BJ (cell line): ENCODE measurements at regions of chr9 and their contacts with region 1.

Region 1: GRCh38 chr9:87107072-87107471 is 159.8 kb upstream of the GAS1 start:
- DNase-seq: no peak
- H3K4me3 ChIP-seq: no peak overlapping the region
- H3K27me3 ChIP-seq: no peaks in the 10 kb centered on the region
- CTCF ChIP-seq: peak; percentile 17; the same call in 1 of the 2 replicates

Region 2: DNA sequence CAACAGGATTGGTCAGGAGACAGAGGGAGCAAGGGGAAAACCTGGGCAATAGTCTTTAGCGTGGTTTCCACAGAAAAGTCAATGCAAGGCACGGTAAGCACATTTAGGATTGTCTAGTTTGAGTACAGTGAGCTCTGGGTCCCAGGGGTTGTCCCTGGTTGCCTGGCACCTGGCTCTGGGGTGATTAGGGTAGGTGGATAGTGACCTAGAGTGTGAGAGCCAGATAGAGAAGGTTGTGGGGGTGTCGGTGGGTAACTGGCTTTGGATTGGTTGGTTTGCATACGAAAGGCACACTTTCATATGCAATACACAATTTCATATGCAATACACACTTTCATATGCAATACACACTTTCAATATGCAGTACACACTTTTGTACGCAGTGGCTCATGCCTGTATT is 987.6 kb before region 1 on chr9:
- CTCF ChIA-PET with region 1: no interaction called
- POLR2A ChIA-PET with region 1: interaction called, 21 read pairs
- DNase-seq: no peak
- H3K4me3 ChIP-seq: no peak overlapping the region
- H3K27me3 ChIP-seq: no peaks in the 10 kb centered on the region; the same call in none of the 2 replicates
- CTCF ChIP-seq: no peak

Region 3: DNA sequence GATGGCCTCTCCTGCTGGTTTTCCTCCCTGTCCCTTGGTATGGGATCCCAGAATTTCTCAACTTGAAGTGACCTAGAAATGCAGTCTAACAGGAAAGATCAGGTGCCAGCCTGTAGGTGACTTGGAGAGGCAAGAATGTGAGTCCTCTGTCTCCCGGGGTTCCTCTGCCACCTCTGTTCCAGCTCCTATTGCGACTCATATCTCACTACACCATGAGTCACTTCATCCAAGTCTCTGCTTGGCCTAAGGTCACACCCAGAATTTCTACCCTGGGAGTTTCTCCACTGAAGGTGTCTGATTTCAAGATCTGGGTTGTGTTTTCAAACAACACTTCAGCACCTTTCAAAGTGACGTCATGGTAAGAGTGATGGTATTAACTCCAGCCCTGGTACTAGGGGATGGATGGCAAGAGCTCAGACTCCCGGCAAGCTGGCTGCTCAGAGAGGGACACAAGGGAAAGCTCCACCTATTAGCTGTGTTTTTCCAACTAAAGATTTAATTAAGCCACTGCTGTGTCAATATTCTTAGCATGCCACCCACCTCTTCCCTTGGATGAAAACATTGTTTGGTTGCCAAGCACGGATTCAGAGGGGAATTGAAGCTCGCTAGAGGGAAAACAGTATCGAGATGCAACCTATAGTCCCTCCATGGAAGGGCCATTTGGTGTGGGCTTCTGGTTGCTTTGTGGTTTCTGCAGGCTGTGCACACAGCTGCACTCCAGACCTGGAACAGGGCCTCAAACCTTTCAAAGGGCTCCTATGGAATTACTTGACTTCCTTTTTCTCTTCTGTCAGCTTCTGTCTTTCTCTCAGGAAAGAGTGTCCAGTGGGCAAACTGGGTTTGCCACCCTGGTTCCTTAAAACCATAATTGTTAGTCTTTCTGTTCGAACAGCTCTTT is 365.5 kb before region 1 on chr9:
- CTCF ChIA-PET with region 1: no interaction called
- POLR2A ChIA-PET with region 1: interaction called, 11 read pairs
- DNase-seq: no peak
- H3K4me3 ChIP-seq: no peak overlapping the region
- H3K27me3 ChIP-seq: no peaks in the 10 kb centered on the region
- CTCF ChIP-seq: no peak

Region 4: DNA sequence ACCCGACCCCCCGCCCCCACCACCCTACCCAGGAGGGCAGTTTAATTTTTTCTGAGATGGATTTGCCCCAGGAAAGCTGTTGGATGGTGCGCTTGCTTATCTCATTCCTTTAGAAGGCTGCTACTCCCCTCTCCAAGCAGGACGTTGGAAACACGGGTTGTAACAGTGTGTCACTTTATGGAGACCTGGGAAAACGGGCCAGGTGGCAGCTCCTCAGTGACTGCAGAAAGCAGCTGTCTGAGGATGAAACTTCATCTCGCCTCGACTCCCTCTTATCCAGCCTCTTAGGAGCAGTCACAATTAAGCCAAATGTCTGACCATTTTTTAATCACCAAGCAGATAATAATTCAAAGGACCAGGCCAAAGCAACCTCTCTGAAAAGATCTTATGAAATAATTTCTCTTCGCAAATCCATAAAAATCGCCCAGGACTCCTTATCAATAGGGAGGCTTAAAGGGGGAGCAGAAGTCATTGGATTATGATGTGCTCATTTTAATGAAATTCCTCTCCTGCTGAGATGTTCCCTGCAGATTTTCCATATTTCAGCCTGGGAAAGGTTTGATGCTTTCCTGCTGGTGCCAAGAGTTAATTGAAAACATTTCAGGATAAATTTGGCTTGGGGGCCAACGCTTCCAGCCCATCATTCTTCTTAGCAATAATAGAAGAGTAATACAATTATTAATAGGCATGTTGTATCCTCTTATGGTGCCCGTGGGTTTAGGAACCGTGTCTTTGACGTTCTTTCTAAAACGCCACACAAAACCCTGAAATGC is 185.7 kb before region 1 on chr9:
- CTCF ChIA-PET with region 1: no interaction called
- POLR2A ChIA-PET with region 1: interaction called, 11 read pairs
- DNase-seq: no peak
- H3K4me3 ChIP-seq: no peak overlapping the region
- H3K27me3 ChIP-seq: no peaks in the 10 kb centered on the region
- CTCF ChIP-seq: no peak

Region 5: GRCh38 chr9:87119328-87119881 is 12.3 kb after region 1 on chr9:
- CTCF ChIA-PET with region 1: no interaction called
- POLR2A ChIA-PET with region 1: no interaction called
- DNase-seq: peak; percentile 42
- H3K4me3 ChIP-seq: no peak overlapping the region
- H3K27me3 ChIP-seq: no peaks in the 10 kb centered on the region
- CTCF ChIP-seq: no peak

Region 6: DNA sequence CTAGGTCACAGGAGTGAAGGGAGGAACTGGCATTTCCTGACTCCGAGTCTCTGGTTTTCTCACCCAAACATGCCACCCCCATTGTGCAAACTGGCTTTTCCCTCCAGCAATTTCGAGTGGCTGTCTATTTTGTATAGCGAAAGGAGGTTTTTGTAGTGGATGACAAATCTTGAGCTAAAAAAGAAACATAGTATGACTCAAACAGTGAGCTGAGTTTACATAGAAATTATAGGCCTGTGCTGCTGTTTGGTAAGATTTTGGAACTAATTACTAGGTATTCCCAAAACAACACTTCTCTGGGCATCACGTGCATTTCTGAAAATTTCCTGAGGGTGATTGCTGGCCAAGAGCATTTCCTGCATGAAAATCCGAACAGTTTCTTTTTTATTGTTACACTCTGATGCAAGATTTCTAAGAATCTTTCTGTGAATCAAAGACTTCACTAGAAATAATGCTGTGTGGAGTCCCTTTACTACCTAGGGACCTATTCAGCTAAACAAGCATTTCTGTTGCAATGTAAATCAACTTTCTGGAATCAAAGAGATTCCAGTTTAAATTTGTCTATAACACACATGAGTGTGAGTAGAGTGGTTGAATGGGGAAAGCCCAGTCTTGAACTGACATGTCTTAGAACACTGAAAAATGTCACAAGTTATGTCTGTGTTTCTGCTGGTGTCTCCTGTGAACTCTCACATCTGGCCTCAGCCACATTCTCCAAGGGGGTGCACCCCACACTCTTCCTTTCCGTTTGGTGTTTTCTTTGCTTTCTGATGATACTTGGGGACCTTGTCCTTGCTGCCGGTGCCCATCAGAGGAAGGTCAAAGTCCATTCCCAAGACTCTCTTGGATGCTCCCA is 357.3 kb after region 1 on chr9:
- CTCF ChIA-PET with region 1: no interaction called
- POLR2A ChIA-PET with region 1: no interaction called
- DNase-seq: peak; percentile 22
- H3K4me3 ChIP-seq: no peak overlapping the region
- H3K27me3 ChIP-seq: no peaks in the 10 kb centered on the region
- CTCF ChIP-seq: no peak

Region 7: DNA sequence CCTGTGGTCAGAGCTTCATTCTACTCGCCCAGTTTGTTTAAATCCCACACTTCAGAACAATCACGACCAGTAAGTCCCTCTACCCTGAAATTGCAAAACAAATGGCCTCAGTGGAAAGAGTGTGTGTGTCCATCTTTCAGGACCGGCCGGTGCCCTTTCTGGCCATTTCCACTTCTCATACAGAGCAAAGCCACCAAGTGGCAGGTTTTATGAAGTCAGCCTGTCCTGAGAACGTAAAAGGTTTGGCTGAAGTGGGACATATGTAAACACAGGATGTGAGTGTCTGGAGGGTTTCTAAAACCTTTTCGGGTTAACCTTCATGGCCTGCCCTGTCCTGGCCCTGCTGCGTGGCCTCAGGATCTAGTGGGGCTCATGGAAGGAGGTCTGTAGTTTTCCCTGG is 1452.6 kb after region 1 on chr9:
- CTCF ChIA-PET with region 1: no interaction called
- POLR2A ChIA-PET with region 1: no interaction called
- DNase-seq: no peak
- H3K4me3 ChIP-seq: no peak overlapping the region
- H3K27me3 ChIP-seq: no peaks in the 10 kb centered on the region
- CTCF ChIP-seq: no peak